Left cardiac atrium (tissue), 4 donors: ENCODE measurements at regions of chr3 and their contacts with region 1.

Region 1: GRCh38 chr3:36957862-36958686 is 13.2 kb upstream of the TRANK1 start:
- DNase-seq: no peak
- ATAC-seq: peak; percentile 62 to 93

Region 2: GRCh38 chr3:35857004-35857403 is 1101.1 kb before region 1 on chr3:
- intact Hi-C with region 1: no loop called
- DNase-seq: no peak
- ATAC-seq: no peak

Region 3: DNA sequence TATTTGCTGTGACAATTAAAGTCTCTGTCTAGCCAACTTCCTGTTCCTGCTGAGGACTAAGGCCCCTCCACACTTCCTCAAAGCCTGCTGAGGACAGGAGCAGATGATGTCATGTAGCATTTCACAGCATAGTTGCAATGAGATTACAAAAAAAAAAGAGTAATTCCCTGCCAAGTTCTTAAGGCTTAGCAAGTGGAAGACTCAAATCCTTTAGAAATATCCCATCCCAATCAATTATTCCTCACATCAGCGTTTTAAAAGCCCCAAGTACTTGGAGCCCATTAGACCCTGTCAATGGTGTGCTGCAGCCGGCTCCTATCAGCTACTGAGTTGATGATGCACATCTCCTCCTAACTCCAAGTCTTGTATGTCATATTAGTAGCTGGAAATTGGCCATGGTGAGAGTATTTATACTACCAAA is 64.9 kb before region 1 on chr3:
- intact Hi-C with region 1: no loop called
- DNase-seq: peak; percentile 40
- ATAC-seq: peak; percentile 77 to 91

Region 4: DNA sequence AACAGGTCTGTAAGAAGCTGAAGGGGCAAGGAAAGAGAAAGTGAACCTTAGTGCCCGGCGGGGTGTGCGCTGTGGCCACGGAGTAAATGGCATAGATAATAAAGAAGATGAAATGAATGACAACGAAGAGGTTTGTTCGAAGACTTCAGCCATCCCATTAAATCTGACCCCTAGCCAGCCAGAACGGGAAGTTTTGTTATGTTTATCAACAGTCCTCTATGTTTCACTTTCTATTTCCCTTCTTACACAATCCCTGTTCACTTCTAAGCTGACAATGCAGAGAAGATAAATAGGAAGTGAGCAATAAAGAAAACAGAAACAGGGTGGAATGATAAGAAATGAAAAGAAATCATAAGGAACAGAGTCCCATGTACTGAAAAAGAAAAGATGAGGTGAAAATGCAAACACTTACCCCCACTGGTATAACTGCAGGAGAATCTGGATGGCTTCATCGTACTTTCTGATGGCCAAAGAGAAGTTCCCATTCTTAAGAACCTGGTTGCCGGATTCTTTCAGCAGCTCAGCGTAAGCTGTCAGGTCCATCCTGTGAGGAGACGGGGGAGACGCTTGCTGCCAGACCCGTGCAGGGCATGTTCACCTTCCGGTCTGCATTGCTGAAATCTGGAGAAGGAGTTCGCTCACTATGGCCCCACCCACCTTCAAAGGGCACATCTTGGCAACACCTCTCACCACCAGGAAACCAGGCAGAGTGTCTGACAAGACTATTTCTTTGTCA is 50.0 kb before region 1 on chr3:
- intact Hi-C with region 1: loop called (anchors 2 to 5 kb)
- DNase-seq: peak; percentile 62
- ATAC-seq: peak; percentile 62 to 77

Region 5: GRCh38 chr3:37028329-37028728 is 70.3 kb after region 1 on chr3:
- intact Hi-C with region 1: no loop called
- DNase-seq: peak; percentile 77
- ATAC-seq: peak; percentile 48 to 77

Region 6: DNA sequence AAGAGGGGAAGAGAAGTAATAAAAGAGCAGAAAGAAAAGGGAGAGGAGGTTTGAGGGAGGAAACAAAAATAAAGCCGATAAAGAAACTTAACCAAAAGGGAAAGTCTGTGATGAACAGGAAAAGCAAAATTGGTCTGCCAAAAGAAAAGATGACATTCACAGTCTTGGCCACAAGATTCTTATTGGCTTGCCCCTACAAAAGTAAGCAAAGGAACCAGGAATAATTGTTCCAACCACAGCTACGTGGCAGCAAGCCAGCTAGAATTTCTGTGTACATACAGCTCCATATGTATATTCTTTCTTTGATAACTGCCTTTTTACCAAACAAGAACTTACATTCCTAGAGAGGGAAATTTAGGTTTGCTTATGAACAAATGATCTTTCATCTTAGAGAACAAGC is 114.8 kb after region 1 on chr3:
- intact Hi-C with region 1: no loop called
- DNase-seq: no peak
- ATAC-seq: no peak